Right ventricle myocardium inferior (tissue), 1 donor: ENCODE measurements at regions of chr3 and their contacts with region 1.

Region 1: DNA sequence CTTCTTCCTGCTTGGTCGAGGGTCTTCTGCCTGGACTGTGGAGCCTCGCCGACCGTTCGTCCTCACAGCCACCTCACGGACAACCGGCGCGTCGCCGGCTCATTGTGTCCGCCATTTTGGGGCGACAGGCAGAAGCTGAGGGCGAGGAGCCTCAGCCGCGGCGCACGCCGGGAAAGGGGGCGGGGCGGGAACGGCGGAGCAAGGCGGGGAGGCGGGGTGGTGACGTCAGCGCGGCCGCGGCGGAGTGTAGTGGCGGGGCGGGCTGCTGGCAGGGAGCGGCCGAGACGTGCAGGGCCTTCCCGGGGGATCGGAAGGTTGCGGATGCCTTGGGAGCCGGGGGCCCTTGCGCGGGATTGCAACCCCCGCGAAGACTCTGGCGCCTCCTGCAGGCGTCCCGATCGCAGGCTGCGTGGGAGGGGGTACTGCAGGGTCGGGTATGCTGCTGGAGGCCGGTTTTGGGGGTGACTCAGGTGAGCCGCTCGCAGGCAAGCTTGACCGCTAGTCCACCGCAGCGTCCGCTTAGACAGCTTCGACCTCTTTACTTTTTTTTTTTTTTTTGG is at the start of gene WDR82:
- DNase-seq: peak; percentile 99
- ATAC-seq: peak; percentile 98
- total RNA-seq, gene WDR82: 62.3 TPM

Region 2: GRCh38 chr3:52238761-52239701 is 39.6 kb before region 1 on chr3 and contains the start of gene TWF2:
- intact Hi-C with region 1: loop called (anchors 2 kb)
- DNase-seq: peak; percentile 92
- ATAC-seq: peak; percentile 86
- total RNA-seq, gene TWF2: 120 TPM

Region 3: GRCh38 chr3:52253314-52254304 is 25.0 kb before region 1 on chr3:
- intact Hi-C with region 1: no loop called
- DNase-seq: no peak
- ATAC-seq: peak; percentile 72

Region 4: GRCh38 chr3:52268036-52268435 is 10.6 kb before region 1 on chr3:
- intact Hi-C with region 1: no loop called
- DNase-seq: no peak
- ATAC-seq: no peak

Region 5: GRCh38 chr3:52406231-52406661 is 127.7 kb after region 1 on chr3:
- intact Hi-C with region 1: no loop called
- DNase-seq: peak; percentile 56
- ATAC-seq: no peak